Cardiac septum (tissue), 1 donor: ENCODE measurements at regions of chr17 and their contacts with region 1.

Region 1: DNA sequence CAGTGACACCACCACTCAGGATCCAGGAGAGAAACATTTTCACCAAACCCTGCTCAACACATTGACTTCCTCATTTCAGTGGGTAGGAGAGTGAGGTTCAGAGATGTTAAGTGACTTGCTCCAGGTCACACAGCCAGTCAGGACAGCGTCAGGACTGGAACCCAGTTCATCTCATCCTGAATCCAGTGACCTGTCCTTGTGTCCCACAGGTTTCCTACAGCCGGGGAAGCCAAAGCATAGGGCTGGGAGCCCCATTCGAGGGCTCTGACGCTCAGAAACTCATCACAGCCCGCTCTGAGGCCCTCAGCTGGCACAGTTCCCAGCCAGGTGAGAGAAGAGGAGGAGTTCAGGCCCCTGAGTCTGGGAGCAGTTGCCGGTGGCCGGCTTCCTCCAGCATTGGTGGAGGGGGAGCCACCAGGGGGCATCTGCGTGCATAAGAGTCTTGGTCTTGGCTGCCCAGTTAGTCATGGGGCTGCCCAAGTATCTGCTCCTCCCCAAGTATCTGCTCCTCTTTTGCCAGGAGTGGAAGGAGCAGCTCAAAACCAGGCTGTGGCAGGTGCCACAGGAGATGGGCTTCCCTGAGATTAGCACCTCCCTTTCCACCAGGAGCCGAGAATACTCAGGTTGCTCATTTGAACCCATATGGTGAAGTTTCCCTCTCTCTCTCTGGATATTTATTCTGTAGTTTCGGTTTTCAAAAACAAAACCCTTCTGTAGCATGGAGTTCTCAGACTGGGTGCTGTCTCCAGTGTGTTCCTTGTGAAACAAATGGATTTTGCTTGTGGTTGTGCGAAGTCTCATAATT is 56.0 kb downstream of the TNFRSF13B start:
- DNase-seq: peak; percentile 76

Region 2: GRCh38 chr17:16428098-16428882 is 487.7 kb before region 1 on chr17:
- intact Hi-C with region 1: no loop called
- DNase-seq: no peak

Region 3: GRCh38 chr17:16991349-16992009 is 75.5 kb after region 1 on chr17:
- intact Hi-C with region 1: loop called (anchors 5 kb)
- DNase-seq: peak; percentile 91

Region 4: GRCh38 chr17:17028059-17028877 is 112.3 kb after region 1 on chr17:
- intact Hi-C with region 1: no loop called
- DNase-seq: no peak